ENCODE measurements at regions of chr1 and their contacts with region 1.

Region 1: DNA sequence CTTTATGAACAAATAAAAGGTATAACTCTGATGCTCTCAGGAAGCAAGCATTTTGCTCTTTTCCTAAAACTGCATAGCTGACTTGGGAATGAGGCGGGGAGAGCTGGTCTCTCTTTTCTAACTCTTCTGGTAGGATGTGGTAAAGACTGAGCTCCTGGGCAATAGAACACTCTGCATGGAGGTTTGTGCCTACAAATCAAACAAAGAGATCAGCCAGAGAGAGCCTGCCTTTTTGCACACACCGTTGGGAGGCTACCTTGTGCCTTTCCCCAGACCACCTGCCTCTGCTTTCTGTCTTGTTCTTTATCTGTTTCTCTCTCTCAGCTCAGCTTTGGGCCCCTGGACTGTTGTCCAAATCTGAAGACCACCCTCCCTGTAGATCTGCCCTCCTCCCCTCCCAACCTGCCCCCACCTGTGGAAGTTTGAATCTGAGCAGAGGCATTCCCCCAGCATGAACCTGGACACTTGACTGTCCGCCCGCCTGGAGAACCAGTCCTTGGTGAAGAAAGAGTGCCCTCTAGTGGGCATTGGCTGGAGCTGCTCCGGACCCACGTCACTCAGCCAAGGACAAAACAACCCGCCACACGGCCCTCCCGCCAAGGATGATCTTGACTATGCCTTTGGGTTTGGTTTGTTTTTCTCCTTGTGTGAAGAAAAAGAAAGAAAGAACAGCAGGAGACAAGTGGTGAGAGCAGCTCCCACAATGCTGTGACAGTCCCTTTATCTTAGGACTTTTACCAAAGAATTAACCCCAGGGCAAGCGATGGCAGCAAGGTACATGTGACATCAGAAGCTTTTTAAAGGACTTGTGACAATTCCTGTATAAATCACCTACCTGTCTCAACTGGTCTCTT is 228.2 kb downstream of the PBX1 start:
- DNase-seq: peak; percentile 85 to 88
- ATAC-seq: peak; percentile 96 to 97
- H3K4me3 ChIP-seq: no peak overlapping the region
- H3K27ac ChIP-seq: peak overlapping the region; percentile 89 to 94
- H3K4me1 ChIP-seq: peaks cover 38% of the 10 kb centered on the region
- CTCF ChIP-seq: peak; percentile 89
- EP300 ChIP-seq: peak in 1 of 2 experiments; percentile 18; a peak in 1 of 5 replicates
- POLR2A ChIP-seq: no peak
- RAD21 ChIP-seq: peak; percentile 97 to 99

Region 2: DNA sequence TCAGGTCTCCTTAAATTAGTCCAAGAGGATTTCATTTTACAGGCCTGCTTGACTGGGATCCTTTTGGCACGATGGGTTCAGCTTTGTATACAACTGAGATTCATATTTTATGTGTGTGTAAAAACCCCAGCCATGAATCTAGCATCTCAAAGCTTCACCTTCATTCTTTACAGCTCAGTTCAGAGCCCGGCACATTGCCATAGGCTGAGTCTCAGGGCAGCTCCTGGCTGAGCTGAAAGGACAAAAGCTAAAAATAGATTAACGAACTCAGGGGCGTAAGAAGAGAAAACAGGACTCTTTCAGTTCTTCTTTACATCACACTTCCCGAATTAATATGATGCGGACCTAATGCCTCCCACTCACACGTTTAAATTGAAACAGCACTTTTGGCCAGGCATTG is 491.0 kb before region 1 on chr1:
- CTCF ChIA-PET with region 1: no interaction called
- POLR2A ChIA-PET with region 1: no interaction called
- DNase-seq: no peak
- ATAC-seq: no peak
- H3K4me3 ChIP-seq: no peak overlapping the region
- H3K27ac ChIP-seq: no peak overlapping the region
- H3K4me1 ChIP-seq: no peaks in the 10 kb centered on the region
- CTCF ChIP-seq: no peak
- EP300 ChIP-seq: no peak
- POLR2A ChIP-seq: no peak
- RAD21 ChIP-seq: no peak

Region 3: GRCh38 chr1:164673584-164674214 is 113.5 kb before region 1 on chr1:
- CTCF ChIA-PET with region 1: interaction called, 17 read pairs
- POLR2A ChIA-PET with region 1: no interaction called
- DNase-seq: peak; percentile 33 to 61
- ATAC-seq: peak in 1 of 2 experiments; percentile 44; a peak in 2 of 6 replicates
- H3K4me3 ChIP-seq: no peak overlapping the region
- H3K27ac ChIP-seq: peak overlapping the region; percentile 63 to 75; a peak in 4 of 6 replicates
- H3K4me1 ChIP-seq: peaks cover 47% of the 10 kb centered on the region
- CTCF ChIP-seq: peak; percentile 48
- EP300 ChIP-seq: no peak
- POLR2A ChIP-seq: no peak
- RAD21 ChIP-seq: peak in 1 of 2 experiments; percentile 31; a peak in 2 of 5 replicates

Region 4: DNA sequence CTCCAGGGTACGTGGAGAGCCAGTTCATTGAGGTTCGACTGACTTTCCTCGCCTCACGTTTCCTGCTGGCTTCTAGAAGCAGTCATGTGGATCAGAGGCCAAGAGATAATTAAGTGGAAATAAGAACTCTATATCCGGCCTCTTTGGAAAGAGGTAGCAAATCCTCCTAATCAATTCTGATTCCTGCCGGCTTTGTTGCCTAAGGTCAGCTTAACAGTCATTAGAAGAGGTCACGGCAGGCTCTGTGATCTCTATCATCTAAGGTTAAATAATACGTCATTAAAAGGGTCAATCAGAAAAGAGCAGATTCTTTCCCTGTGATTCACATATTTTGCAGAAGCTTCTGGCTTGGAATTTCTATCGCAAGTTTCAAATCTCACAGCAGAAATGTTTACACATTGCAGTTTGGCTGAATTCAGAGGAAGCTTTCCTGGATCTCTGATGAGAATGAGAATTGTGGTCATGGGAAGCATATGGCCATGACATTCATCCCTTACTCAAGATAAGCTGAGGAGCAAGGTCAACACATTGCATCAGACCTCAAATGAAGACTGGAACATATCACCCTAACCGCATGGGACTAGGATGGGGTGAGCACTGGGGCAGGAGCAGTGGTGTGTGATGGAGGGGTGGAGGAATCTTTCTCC is 38.8 kb before region 1 on chr1:
- CTCF ChIA-PET with region 1: interaction called, 18 read pairs
- POLR2A ChIA-PET with region 1: no interaction called
- DNase-seq: peak; percentile 44 to 98
- ATAC-seq: peak; percentile 92
- H3K4me3 ChIP-seq: no peak overlapping the region
- H3K27ac ChIP-seq: peak overlapping the region; percentile 86 to 90
- H3K4me1 ChIP-seq: peaks cover 76% of the 10 kb centered on the region
- CTCF ChIP-seq: no peak
- EP300 ChIP-seq: peak; percentile 98 to 100
- POLR2A ChIP-seq: no peak
- RAD21 ChIP-seq: peak; percentile 29 to 76; a peak in 4 of 5 replicates

Region 5: GRCh38 chr1:164803366-164803765 is 16.2 kb after region 1 on chr1:
- CTCF ChIA-PET with region 1: interaction called, 17 read pairs
- POLR2A ChIA-PET with region 1: no interaction called
- DNase-seq: no peak
- ATAC-seq: no peak
- H3K4me3 ChIP-seq: no peak overlapping the region
- H3K27ac ChIP-seq: no peak overlapping the region
- H3K4me1 ChIP-seq: peaks cover 20% of the 10 kb centered on the region
- CTCF ChIP-seq: no peak
- EP300 ChIP-seq: no peak
- POLR2A ChIP-seq: no peak
- RAD21 ChIP-seq: no peak

Region 6: DNA sequence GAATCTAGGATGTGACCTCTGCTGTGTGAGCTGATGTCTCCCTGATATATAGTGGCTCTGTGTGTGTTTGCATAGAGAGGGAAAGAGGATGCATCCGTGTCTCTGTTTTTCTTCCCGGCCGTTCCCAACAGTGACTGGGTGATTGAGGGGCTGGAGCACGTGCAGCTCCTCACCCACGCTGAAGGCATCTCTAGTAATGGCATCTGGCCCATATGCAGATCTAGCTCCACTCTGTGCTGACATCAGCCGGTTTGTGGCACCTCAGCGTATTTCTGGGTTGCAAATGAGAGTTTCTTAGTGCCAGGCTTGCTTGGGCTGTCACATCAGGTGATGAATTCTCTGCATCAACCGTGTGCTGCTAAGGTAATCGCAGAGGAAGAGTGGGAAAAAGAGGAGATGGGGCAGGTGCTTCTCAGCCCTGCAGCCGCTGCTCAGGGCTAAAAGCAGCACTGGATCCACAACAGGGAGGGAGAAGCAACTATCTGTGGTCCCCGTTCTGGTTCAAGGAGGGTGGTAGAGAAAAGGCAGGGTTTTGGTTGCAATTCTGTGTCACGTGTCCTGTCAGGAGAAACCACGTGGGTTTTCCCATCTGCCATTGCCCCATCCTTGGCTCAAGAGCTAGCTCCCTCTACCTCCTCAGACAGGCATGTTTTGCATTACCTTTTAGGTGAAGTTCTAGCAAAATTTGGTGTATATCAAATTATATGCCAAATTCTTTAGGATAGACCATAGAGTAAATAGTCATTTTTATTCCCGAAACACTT is 54.7 kb after region 1 on chr1:
- CTCF ChIA-PET with region 1: no interaction called
- POLR2A ChIA-PET with region 1: no interaction called
- DNase-seq: no peak
- ATAC-seq: no peak
- H3K4me3 ChIP-seq: no peak overlapping the region
- H3K27ac ChIP-seq: no peak overlapping the region
- H3K4me1 ChIP-seq: no peaks in the 10 kb centered on the region
- CTCF ChIP-seq: no peak
- EP300 ChIP-seq: no peak
- POLR2A ChIP-seq: no peak
- RAD21 ChIP-seq: no peak